CD4-positive, alpha-beta memory T cell (primary cell): ENCODE measurements at regions of chr2 and their contacts with region 1.

Region 1: GRCh38 chr2:155368934-155369333 is 670.4 kb downstream of the KCNJ3 start:
- DNase-seq: peak in 2 of 5 donors; percentile 3 to 11
- H3K4me3 ChIP-seq: no peak overlapping the region
- H3K4me3 Mint-ChIP-seq: no peak overlapping the region
- H3K27ac ChIP-seq: no peak overlapping the region
- H3K27ac Mint-ChIP-seq: no peak overlapping the region
- H3K4me1 ChIP-seq: no peaks in the 10 kb centered on the region
- H3K4me1 Mint-ChIP-seq: no peaks in the 10 kb centered on the region
- H3K27me3 ChIP-seq: no peaks in the 10 kb centered on the region
- H3K27me3 Mint-ChIP-seq: no peaks in the 10 kb centered on the region

Region 2: DNA sequence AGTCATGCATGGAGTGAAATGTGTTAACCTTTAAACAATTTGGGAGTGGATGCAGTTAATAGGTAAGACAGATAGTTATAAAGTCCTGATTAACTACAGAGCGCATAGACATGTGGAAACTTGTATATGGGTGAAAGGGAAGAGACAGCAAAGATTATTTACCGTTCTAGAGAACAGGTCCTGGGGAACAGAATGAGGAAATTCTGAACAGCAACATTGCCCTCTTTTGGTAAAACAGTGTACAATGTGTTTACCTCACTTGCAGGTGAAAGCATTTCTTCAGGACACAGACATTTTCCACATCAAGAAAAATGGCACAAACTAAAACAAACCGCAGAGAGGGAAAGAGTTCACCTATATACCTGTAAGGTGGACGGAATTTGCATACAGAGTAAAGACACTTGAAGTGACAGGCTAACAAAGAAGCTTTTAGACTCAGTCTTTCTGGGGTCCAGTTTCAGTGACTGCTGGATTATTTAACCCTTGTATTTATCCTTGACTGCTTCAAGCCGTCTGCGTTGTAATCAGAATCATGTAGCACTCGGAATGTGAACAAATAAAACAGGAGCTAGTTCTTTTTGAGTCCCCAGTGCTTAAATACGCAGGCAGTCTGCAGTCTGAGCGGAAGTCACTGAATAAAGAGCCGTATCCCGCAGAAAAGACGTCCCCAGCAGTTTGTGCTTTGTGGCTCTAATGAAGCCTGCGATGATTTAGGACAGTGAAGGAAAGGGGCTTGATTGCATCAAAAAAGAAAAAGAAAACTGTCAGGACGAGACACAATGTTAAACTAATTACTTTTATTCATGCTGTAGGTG is 1523.7 kb after region 1 on chr2:
- CTCF ChIA-PET with region 1: no interaction called
- POLR2A ChIA-PET with region 1: no interaction called
- intact Hi-C with region 1: loop called (anchors 2 kb)
- DNase-seq: peak in 3 of 5 donors; percentile 7 to 11 (median 11)
- H3K4me3 ChIP-seq: no peak overlapping the region
- H3K4me3 Mint-ChIP-seq: peak overlapping the region in 2 of 8 donors; percentile 27 to 61
- H3K27ac ChIP-seq: no peak overlapping the region
- H3K27ac Mint-ChIP-seq: no peak overlapping the region
- H3K4me1 ChIP-seq: peaks cover 5% of the 10 kb centered on the region
- H3K4me1 Mint-ChIP-seq: peaks cover 0 to 11% (median 9%) of the 10 kb centered on the region in 4 donors
- H3K27me3 ChIP-seq: no peaks in the 10 kb centered on the region
- H3K27me3 Mint-ChIP-seq: peaks cover 8 to 12% of the 10 kb centered on the region in 2 donors